Panc1 (cell line): ENCODE measurements at regions of chr15 and their contacts with region 1.

Region 1: DNA sequence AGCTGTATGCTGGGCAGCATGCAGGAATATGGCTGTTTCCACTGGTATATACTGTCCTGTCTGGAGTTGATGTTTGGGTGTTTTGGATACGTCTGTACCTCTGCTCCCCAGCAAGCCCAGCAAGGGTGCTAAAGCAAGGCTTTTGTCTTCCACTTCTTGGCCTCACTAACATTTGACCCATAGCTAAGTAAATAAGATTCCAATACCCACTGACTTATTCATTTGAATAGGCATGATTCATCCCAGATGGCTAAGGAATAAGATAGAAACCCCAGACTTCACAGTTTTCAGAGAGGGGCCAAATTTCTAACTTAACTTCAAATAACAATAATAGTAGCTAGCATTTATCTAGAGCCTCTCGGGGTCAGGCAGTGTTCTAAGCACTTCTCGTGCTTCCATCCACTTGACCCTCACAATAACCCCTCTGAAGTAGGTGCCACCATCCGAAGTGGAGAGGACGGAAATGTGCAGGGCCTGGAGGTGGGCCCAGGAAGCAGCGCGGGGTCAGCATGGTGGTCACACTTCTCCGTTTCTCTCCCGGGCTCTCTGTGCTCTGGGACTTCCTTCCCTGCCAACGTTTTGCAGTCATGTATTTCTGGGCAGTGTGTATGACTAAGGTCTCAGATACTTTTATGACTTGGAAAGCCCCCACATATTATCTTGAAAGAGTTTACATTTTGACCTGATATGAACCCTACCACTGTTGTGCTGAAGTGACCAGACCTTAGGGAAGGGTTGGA is 39.3 kb downstream of the LRRK1 start:
- DNase-seq: peak; percentile 42
- ATAC-seq: peak; percentile 88
- H3K4me3 ChIP-seq: peak overlapping the region; percentile 18 to 40; a peak in 3 of 4 replicates
- H3K27ac ChIP-seq: peak overlapping the region; percentile 100
- H3K4me1 ChIP-seq: peaks cover 63% of the 10 kb centered on the region
- H3K27me3 ChIP-seq: no peaks in the 10 kb centered on the region
- CTCF ChIP-seq: no peak

Region 2: DNA sequence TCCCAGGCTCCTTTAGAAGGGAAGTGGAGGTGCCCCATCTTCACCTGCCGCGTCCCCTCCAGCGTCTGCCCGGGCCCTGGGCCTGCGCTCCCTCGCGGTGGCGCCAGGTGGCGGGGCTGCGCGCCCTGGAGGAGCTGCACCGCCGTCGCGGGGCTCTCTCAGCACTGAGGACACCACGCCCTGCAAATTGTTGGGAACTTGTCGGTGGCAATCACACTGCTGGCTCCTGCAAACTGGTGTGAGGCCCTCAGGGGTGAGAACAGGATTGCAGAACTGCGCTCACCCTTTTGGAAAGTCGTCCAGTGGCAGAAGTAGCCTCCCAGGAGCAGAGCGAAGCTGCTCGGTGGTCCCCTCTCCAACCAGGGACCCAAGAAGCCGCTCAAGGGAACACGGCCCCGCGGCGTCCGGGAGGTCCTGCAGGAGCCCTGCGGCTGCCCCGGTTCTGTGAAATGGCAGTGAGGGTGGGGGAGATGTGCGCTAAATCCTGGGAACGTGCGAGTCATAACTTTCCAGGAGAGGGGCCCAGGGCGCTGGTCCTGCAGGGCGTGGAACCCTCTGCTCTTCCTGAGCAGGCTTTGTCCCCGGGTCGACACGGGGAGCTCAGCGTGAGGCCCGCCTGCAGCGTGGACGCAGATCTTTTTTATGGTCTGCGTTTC is 40.3 kb before region 1 on chr15:
- CTCF ChIA-PET with region 1: no interaction called
- POLR2A ChIA-PET with region 1: no interaction called
- in situ Hi-C with region 1: no loop called
- intact Hi-C with region 1: loop called (anchors 2 kb)
- DNase-seq: peak; percentile 55
- ATAC-seq: peak; percentile 86
- H3K4me3 ChIP-seq: peak overlapping the region; percentile 69 to 77
- H3K27ac ChIP-seq: peak overlapping the region; percentile 99
- H3K4me1 ChIP-seq: peaks cover 42% of the 10 kb centered on the region
- H3K27me3 ChIP-seq: no peaks in the 10 kb centered on the region
- CTCF ChIP-seq: peak; percentile 98

Region 3: DNA sequence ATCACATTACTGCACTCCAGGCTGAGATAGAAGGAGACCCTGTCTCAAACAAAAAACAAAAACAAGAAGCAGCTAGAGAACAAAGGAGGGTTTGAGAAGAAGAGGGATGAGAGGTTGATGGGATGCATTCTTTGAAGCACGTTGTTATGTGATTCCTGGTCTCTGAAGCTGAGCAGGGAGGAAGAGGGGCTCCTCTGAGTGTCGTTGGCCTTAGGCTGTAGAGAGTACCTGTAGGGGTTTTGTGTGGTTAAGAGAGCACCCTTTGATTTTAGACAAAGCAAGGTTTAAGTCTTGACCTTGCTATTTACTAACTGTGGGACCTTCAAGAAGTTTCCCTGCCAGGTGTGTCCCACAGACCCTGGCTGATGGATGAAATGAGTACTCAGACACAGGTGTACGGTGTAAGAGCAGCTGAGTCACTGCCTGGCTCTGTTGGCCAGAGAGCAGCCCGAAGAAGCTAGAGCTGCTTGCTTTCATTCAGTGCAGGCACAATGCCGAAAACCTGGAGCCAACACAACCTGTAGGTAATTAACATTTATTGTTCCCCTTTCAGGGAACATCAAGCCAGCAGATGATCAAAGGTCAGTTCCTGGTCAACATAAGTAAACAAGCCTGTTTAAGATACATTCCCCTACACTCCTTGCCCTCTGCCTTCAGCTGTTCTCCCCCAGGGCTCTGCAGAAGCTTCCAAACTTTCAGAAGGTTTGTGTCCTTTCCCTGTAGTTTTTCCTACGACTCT is 27.8 kb after region 1 on chr15:
- CTCF ChIA-PET with region 1: interaction called, 11 read pairs
- POLR2A ChIA-PET with region 1: no interaction called
- in situ Hi-C with region 1: no loop called
- intact Hi-C with region 1: no loop called
- DNase-seq: no peak
- ATAC-seq: peak; percentile 79
- H3K4me3 ChIP-seq: no peak overlapping the region
- H3K27ac ChIP-seq: peak overlapping the region; percentile 78
- H3K4me1 ChIP-seq: peaks cover 36% of the 10 kb centered on the region
- H3K27me3 ChIP-seq: no peaks in the 10 kb centered on the region
- CTCF ChIP-seq: no peak

Region 4: GRCh38 chr15:101251830-101252820 is 293.6 kb after region 1 on chr15 and contains the start of gene CHSY1:
- CTCF ChIA-PET with region 1: no interaction called
- POLR2A ChIA-PET with region 1: interaction called, 12 read pairs
- in situ Hi-C with region 1: no loop called
- intact Hi-C with region 1: no loop called
- DNase-seq: peak; percentile 33
- ATAC-seq: peak; percentile 86
- H3K4me3 ChIP-seq: peak within 1 kb of the TSS; percentile 87 to 93
- H3K27ac ChIP-seq: peak within 1 kb of the TSS; percentile 96
- H3K4me1 ChIP-seq: peaks cover 48% of the 10 kb centered on the region
- H3K27me3 ChIP-seq: no peaks in the 10 kb centered on the region
- CTCF ChIP-seq: peak; percentile 70
- total RNA-seq, gene CHSY1: 50.8 TPM